Activated T-helper 1 cell treated with anti-CD3 and anti-CD28 coated beads, Interleukin-12 subunit alpha, Interleukin-12 subunit beta, Interleukin-2, Interleukin-4 antibody, amounts not matched to agents 30 ng/mL and 10 ng/mL and 1 ng/mL, durations not matched to agents 14 hours and 24 hours and 36 hours (primary cell): ENCODE measurements at regions of chr1 and their contacts with region 1.

Region 1: DNA sequence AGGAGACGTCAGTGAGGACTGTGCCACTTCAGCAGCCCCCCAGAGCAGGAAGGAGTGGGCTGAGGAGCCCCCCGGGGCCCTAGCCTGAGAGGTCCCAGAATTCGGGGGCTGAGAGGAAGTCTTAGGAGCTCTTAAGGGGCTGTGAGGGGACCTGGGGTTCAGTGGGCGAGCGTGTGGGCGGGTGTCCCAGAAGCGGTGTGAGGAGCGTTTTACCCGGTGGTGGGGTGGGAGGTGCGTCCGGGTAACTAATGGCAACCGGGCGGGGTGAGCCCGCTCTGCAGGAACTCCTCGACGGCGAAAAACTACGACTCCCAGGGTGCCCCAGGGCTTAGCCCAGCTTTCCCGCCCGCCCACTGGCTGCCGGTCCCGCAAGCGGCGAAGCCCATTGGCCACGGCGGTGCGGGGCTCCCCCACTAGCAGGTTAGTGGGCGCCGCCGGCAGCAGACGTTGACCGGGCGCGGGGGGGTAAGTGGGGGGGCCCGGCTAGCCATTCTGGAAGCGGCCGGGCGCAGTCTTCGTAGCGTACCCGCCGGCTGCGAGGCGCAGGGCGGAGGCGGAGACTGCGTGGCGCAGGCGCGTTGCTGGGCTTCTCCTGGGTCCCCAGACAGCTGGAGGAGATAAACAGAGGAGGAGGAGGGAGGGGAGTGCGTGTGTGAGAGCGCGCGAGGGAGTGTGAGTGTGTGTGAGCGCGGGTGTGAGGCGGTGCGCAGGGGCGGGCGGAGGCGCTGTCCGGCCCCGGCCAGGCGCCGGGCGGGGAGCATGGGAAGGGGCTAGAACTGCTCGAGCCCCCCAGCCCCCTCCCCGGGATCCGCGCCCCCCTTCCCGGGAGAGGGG is at the start of gene WDTC1:
- DNase-seq: peak; percentile 98
- H3K4me3 Mint-ChIP-seq: peak within 1 kb of the TSS; percentile 99
- H3K27ac Mint-ChIP-seq: peak within 1 kb of the TSS; percentile 97
- H3K4me1 Mint-ChIP-seq: peaks cover 27% of the 10 kb centered on the region
- H3K27me3 Mint-ChIP-seq: no peaks in the 10 kb centered on the region
- total RNA-seq, gene WDTC1: 18.4 and 20.1 TPM in 2 replicates

Region 2: DNA sequence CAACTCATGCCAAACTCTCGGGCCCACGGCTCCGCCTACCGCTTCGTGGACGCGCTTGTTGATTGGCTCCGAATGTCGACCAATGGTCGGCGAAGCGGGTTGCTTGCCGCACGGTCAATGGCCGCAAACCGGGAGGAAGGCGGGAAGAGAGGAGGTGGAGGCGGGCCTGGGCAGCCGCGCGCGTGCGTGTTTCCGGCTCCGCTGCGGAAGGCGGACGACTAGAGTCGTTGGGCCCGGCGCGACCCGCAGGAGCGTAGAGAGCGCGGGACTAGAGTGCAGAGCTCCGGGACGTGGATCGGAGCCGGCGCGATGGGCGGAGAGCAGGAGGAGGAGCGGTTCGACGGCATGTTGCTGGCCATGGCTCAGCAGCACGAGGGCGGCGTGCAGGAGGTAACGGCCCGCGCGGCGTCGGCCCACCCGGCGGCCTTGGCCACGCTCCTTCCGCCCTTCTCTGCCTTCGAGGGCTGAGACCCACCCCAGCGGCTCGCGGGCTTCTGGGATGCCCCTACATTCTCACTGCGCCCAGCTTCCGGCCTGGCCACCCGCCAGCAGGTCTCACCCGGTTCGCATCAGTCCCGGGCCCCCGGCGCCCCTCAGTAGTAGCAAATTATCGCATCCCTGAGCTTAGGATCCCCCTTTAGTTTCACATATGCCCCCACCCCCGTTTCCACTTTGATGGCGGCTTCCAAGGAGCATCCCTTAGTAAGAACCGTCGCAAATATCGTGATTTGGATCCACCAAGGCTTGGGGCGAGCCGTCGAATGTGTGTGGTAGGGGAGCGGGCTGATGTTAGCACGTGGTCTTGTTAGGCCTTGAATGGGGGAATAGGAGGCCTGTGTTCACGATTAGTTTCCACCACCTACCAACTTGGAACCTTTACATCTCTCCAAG is 312.5 kb before region 1 on chr1 and contains the start of gene NUDC:
- intact Hi-C with region 1: loop called (anchors 1 kb)
- DNase-seq: peak; percentile 97
- H3K4me3 Mint-ChIP-seq: peak within 1 kb of the TSS; percentile 97
- H3K27ac Mint-ChIP-seq: peak within 1 kb of the TSS; percentile 96
- H3K4me1 Mint-ChIP-seq: peaks cover 31% of the 10 kb centered on the region
- H3K27me3 Mint-ChIP-seq: peaks cover 2% of the 10 kb centered on the region
- total RNA-seq, gene NUDC: 151 and 152 TPM in 2 replicates

Region 3: GRCh38 chr1:27154991-27155781 is 79.1 kb before region 1 on chr1 and contains the start of gene SLC9A1:
- intact Hi-C with region 1: loop called (anchors 1 kb)
- DNase-seq: peak; percentile 90
- H3K4me3 Mint-ChIP-seq: peak within 1 kb of the TSS; percentile 93
- H3K27ac Mint-ChIP-seq: peak within 1 kb of the TSS; percentile 93
- H3K4me1 Mint-ChIP-seq: peaks cover 47% of the 10 kb centered on the region
- H3K27me3 Mint-ChIP-seq: no peaks in the 10 kb centered on the region
- total RNA-seq, gene SLC9A1: 27.9 and 28.8 TPM in 2 replicates

Region 4: GRCh38 chr1:27192039-27192529 is 42.2 kb before region 1 on chr1:
- intact Hi-C with region 1: no loop called
- DNase-seq: no peak
- H3K4me3 Mint-ChIP-seq: no peak overlapping the region
- H3K27ac Mint-ChIP-seq: no peak overlapping the region
- H3K4me1 Mint-ChIP-seq: no peaks in the 10 kb centered on the region
- H3K27me3 Mint-ChIP-seq: peaks cover 6% of the 10 kb centered on the region

Region 5: GRCh38 chr1:27257155-27257554 is 22.9 kb after region 1 on chr1:
- intact Hi-C with region 1: loop called (anchors 1 kb)
- DNase-seq: no peak
- H3K4me3 Mint-ChIP-seq: no peak overlapping the region
- H3K27ac Mint-ChIP-seq: no peak overlapping the region
- H3K4me1 Mint-ChIP-seq: peaks cover 30% of the 10 kb centered on the region
- H3K27me3 Mint-ChIP-seq: peaks cover 3% of the 10 kb centered on the region

Region 6: DNA sequence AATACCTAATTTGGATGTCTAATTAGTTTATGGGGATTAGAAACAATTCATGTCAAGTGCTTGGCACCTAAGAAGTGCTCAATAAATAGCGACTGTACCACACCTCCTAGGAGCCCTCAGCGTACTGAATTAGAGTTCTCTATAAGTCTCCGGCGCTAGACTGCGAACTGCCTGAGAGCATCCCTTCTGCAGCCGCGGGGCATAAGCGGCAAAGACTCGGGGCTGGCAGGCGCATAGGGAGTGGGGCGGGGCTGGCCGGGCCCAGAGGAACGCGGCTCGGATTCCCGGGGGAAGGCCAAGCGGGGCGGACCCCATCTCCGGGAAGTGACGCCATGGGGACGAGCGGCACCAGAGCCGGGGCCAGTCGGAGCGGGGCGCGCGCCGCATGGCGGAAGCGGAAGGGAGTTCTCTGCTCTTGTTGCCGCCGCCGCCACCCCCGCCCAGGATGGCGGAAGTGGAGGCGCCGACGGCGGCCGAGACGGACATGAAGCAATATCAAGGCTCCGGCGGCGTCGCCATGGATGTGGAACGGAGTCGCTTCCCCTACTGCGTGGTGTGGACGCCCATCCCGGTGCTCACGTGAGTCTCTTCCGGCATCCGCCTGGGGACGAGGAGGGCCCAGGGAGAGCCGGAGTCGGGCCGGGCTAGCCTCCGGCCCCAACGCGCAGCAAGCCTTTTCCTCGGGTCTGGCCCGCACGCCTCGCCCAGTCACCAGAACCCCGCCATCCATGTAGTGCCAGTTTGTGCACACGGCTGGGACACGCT is 87.7 kb after region 1 on chr1 and contains the start of gene TMEM222:
- intact Hi-C with region 1: loop called (anchors 1 kb)
- DNase-seq: peak; percentile 98
- H3K4me3 Mint-ChIP-seq: peak within 1 kb of the TSS; percentile 97
- H3K27ac Mint-ChIP-seq: peak within 1 kb of the TSS; percentile 90
- H3K4me1 Mint-ChIP-seq: peaks cover 33% of the 10 kb centered on the region
- H3K27me3 Mint-ChIP-seq: no peaks in the 10 kb centered on the region
- total RNA-seq, gene TMEM222: 44.3 and 47.4 TPM in 2 replicates

Region 7: GRCh38 chr1:27489910-27490741 is 255.9 kb after region 1 on chr1 and contains the start of gene WASF2:
- intact Hi-C with region 1: loop called (anchors 1 kb)
- DNase-seq: peak; percentile 96
- H3K4me3 Mint-ChIP-seq: peak within 1 kb of the TSS; percentile 96
- H3K27ac Mint-ChIP-seq: peak within 1 kb of the TSS; percentile 98
- H3K4me1 Mint-ChIP-seq: peaks cover 28% of the 10 kb centered on the region
- H3K27me3 Mint-ChIP-seq: no peaks in the 10 kb centered on the region
- total RNA-seq, gene WASF2: 108 and 109 TPM in 2 replicates